Cardiac septum (tissue), 1 donor: ENCODE measurements at regions of chr1 and their contacts with region 1.

Region 1: DNA sequence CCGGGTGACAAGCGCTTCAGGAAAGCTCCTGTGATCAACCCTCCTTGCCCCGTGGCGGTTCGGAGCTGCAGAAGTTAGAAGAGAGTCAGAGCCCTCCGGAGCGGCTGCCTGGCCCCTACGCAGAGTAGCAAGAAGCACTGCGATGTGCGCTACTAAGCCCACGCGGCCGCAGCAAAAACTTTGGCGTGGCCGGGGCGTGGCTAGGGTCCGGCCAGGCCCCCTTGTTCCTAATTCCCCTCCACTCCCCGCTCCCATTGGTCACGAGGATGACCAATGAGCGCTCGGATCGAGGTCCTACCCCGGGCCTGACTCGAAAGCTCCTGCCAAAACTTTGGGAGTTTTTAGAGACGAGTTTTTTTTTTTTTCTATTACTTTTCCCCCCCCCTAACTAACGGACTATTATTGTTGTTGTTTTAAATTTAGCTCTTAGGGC is at the start of gene HLX:
- DNase-seq: peak; percentile 98
- total RNA-seq, gene HLX: 8.1 TPM

Region 2: DNA sequence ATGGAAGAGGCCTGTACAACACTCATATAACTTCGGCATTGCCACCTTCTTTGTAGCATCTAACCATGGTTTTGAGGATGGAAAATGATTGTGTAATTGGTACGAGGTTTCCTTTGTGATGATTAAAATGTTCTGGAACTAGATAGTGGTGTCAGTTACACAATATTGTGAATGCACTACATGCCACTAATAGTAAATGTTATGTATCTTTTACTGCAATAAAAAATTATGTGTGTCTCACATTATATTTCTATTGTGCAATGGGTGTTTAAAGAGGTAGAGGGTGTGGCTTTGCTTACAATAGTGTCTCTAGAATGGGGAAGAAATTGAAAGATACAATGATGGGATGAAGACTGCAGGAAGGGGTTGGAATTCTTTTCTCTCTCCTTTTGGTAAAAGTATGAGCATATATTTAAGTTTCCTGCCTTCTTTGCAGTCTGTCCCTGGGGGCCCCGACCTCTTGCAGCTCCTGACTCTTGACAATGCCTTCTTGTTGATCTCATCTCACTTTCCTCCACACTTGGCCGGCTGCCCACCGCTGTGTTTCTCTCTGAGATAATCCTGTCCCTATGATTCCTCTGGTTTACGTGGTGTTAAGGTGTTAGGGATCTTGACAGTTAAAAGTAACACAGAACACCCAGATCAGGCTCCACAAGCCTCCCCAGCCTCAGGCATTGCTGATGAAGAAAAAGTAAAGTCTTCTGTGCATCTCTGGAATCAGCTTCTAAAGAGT is 53.1 kb before region 1 on chr1:
- intact Hi-C with region 1: no loop called
- DNase-seq: no peak

Region 3: GRCh38 chr1:220843481-220844011 is 35.5 kb before region 1 on chr1:
- intact Hi-C with region 1: loop called (anchors 2 kb)
- DNase-seq: no peak

Region 4: DNA sequence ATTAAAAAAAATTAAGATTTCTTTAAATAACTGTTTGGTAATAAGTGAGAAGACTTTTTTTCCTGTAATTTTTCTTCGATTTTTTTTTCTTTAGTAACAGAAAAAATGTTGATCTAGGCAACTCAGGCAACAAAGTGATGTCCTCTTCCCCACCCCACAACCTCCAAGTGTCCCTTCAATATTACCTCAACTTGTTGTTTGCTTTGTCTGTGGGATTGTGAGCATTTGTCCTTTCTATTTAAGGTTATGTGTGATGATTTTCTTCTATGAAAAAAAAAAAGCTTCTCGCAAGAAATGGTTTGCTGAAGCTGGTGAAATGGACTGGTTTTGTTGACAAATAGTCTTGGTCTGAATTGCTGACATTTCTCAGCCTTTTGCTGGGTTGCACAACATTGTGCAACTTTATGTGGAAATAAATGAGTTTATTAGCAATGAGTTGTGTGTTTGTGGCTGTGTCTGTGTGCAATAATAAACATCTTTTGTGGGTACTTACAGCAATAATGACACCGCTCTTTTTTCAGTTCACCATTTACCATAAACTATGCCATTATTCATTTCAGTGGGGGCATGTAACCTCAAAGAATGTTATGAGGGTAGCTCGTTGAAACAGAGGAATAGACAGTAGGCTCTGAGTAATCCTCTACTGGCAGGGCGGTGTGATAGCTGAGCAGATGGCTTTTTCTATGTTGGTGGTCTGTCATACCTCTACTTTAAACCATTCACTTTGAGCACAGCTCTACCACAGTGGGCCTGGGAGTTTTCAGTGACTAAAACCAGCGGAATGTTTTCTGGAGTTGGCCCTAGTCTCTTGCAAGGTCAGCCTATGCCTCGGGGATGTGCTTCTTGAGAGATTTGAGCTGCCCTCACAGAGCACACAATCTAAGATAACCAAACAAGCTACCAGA is 218.6 kb after region 1 on chr1:
- intact Hi-C with region 1: loop called (anchors 5 kb)
- DNase-seq: no peak

Region 5: GRCh38 chr1:221174330-221174999 is 295.4 kb after region 1 on chr1:
- intact Hi-C with region 1: loop called (anchors 10 kb)
- DNase-seq: peak; percentile 82

Region 6: DNA sequence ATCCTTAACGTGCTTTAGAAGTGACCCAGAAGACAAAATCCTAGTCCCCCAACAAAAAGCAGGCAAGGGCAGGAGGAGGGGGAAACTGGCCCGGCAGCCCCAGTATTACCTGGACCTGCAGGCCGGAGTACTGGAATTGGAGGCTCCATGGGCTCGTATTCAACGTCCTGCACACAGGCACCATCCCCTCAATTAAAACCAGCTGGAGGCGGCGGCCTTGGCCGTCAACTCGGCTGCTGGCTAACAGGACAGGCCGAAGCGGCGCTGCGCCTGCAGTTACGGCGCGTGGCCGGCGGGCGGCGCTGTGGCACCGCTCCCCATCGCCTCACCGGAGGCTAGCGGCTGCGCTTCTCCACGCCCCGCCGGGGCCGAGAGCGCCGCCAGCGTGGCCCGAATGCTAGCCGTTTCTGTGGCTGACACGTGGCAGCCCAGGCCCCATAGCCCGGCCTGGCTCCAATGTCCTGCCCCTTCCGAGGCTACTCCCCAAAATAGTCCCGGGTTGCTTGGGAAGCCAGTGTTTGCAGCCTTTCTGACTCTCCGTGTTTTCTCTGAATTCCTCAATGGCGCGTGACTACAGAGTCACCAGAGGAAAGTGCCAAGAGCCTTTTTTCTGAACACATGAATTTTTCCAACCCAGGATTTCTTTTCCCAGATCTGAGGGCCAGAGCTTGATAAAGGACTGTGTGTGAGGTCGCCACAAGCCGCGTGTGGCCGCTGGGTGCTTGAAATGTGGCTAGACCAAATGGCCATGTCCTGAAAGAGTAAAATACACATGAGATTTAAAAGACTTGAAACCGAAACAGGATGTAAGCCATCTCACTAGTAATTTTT is 1586.3 kb after region 1 on chr1:
- intact Hi-C with region 1: loop called (anchors 10 kb)
- DNase-seq: peak; percentile 93